Gastrocnemius medialis (tissue), 4 donors: ENCODE measurements at regions of chr20 and their contacts with region 1.

Region 1: GRCh38 chr20:43187476-43188233 is 2.1 kb downstream of the PTPRT start:
- DNase-seq: peak in 1 of 2 donors; percentile 34
- ATAC-seq: no peak
- H3K4me3 ChIP-seq: peak overlapping the region in 1 of 4 donors; percentile 11
- H3K27ac ChIP-seq: no peak overlapping the region
- H3K4me1 ChIP-seq: no peaks in the 10 kb centered on the region
- H3K27me3 ChIP-seq: peaks cover 30 to 35% (median 34%) of the 10 kb centered on the region in 3 donors
- CTCF ChIP-seq: peak; percentile 42 to 88 (median 70)
- POLR2A ChIP-seq: no peak

Region 2: GRCh38 chr20:41738604-41739206 is 1449.0 kb before region 1 on chr20:
- in situ Hi-C with region 1: loop called (anchors 5 to 25 kb)
- intact Hi-C with region 1: no loop called
- DNase-seq: peak in 1 of 2 donors; percentile 12
- ATAC-seq: no peak
- H3K4me3 ChIP-seq: no peak overlapping the region
- H3K27ac ChIP-seq: no peak overlapping the region
- H3K4me1 ChIP-seq: no peaks in the 10 kb centered on the region
- H3K27me3 ChIP-seq: no peaks in the 10 kb centered on the region
- CTCF ChIP-seq: peak in 4 of 5 experiments; percentile 39 to 70 (median 46)
- POLR2A ChIP-seq: no peak

Region 3: GRCh38 chr20:41889126-41889870 is 1298.4 kb before region 1 on chr20:
- in situ Hi-C with region 1: loop called in 1 of 4 experiments (anchors 25 kb)
- intact Hi-C with region 1: no loop called
- DNase-seq: no peak
- ATAC-seq: no peak
- H3K4me3 ChIP-seq: no peak overlapping the region
- H3K27ac ChIP-seq: no peak overlapping the region
- H3K4me1 ChIP-seq: no peaks in the 10 kb centered on the region
- H3K27me3 ChIP-seq: no peaks in the 10 kb centered on the region
- CTCF ChIP-seq: no peak
- POLR2A ChIP-seq: no peak

Region 4: DNA sequence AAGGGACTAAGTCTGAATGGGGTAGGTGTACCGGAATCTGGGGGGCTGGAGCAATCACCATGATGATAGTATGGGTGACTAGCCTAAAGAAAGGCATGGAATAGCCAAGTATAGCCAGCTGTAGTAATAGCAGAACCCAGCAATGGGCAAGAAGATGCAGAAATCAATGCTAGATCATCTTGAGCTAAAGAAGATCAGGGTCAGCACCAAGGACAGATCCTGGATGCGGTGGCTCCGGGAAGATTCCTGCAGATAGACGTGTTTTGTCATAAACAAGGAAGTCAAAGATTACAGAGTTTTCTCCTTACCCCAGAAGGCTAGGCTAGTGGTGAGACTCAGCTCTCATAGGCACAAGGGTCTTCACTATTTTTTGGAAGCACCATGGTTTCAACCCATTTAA is 1007.9 kb before region 1 on chr20:
- in situ Hi-C with region 1: loop called in 1 of 4 experiments (anchors 25 kb)
- intact Hi-C with region 1: no loop called
- DNase-seq: no peak
- ATAC-seq: no peak
- H3K4me3 ChIP-seq: no peak overlapping the region
- H3K27ac ChIP-seq: no peak overlapping the region
- H3K4me1 ChIP-seq: no peaks in the 10 kb centered on the region
- H3K27me3 ChIP-seq: no peaks in the 10 kb centered on the region
- CTCF ChIP-seq: no peak
- POLR2A ChIP-seq: no peak

Region 5: DNA sequence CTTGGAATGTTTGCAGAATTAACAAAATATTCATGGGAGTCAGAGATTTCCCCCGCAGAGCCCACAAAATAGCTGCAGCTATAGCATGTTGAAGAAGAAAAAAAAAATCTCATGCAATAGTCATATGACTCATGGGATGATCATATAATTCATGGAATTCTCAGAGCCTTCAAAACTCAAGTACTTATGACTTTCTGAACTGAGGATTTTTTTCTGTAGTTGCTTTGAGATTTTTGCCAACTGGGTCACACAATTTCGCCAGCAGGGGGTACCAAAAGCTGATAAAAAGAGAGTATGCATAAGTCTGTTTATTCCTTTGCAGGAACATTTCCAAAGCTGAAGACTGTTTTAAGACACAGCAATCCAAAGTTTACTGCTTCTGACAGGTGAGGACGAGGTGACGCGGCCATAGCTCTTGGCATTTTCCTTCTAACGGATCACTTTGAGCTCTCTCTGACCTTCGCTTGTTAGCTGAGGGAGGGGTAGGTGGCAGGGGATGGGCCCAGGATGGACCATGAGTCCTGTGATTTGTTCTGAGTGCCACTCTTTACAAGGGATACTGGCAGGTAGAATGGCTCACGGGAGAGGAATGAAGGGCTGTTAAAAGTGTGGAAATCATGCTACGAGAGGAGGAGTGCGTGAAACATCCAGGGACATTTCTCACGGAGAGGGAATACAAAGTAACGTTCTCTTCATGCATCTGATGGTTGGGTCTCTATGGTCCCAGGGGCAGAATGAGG is 983.3 kb before region 1 on chr20:
- in situ Hi-C with region 1: loop called in 2 of 4 experiments (anchors 25 kb)
- intact Hi-C with region 1: no loop called
- DNase-seq: no peak
- ATAC-seq: no peak
- H3K4me3 ChIP-seq: no peak overlapping the region
- H3K27ac ChIP-seq: no peak overlapping the region
- H3K4me1 ChIP-seq: no peaks in the 10 kb centered on the region
- H3K27me3 ChIP-seq: no peaks in the 10 kb centered on the region
- CTCF ChIP-seq: no peak
- POLR2A ChIP-seq: no peak

Region 6: GRCh38 chr20:43205699-43206098 is 18.0 kb after region 1 on chr20:
- in situ Hi-C with region 1: no loop called
- intact Hi-C with region 1: no loop called
- DNase-seq: no peak
- ATAC-seq: no peak
- H3K4me3 ChIP-seq: no peak overlapping the region
- H3K27ac ChIP-seq: no peak overlapping the region
- H3K4me1 ChIP-seq: no peaks in the 10 kb centered on the region
- H3K27me3 ChIP-seq: no peaks in the 10 kb centered on the region
- CTCF ChIP-seq: no peak
- POLR2A ChIP-seq: no peak

Region 7: DNA sequence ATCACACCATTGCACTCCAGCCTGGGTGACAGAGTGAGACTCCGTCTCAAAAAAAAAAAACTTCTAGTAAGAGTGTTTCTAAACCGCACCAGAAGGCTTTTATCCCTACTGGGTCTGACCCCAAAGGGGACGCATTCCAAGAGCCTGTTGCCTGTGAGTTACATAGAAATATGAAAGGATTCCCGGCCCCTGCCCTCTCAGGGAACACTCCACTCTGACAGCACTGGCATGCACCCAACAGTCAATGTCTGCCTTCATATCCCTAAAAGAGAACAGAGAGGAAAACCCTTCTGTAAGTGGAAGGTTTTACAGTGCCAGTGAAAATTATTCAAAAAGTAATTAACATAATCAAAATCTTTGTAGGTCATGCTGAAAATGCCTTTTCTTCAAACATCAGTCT is 119.2 kb after region 1 on chr20:
- in situ Hi-C with region 1: no loop called
- intact Hi-C with region 1: no loop called
- DNase-seq: no peak
- ATAC-seq: no peak
- H3K4me3 ChIP-seq: no peak overlapping the region
- H3K27ac ChIP-seq: no peak overlapping the region
- H3K4me1 ChIP-seq: no peaks in the 10 kb centered on the region
- H3K27me3 ChIP-seq: no peaks in the 10 kb centered on the region
- CTCF ChIP-seq: no peak
- POLR2A ChIP-seq: no peak